Left cardiac atrium (tissue), 4 donors: ENCODE measurements at regions of chr13 and their contacts with region 1.

Region 1: GRCh38 chr13:112873851-112874750 is 94.9 kb upstream of the MCF2L start:
- DNase-seq: peak; percentile 85
- ATAC-seq: peak; percentile 80 to 84

Region 2: DNA sequence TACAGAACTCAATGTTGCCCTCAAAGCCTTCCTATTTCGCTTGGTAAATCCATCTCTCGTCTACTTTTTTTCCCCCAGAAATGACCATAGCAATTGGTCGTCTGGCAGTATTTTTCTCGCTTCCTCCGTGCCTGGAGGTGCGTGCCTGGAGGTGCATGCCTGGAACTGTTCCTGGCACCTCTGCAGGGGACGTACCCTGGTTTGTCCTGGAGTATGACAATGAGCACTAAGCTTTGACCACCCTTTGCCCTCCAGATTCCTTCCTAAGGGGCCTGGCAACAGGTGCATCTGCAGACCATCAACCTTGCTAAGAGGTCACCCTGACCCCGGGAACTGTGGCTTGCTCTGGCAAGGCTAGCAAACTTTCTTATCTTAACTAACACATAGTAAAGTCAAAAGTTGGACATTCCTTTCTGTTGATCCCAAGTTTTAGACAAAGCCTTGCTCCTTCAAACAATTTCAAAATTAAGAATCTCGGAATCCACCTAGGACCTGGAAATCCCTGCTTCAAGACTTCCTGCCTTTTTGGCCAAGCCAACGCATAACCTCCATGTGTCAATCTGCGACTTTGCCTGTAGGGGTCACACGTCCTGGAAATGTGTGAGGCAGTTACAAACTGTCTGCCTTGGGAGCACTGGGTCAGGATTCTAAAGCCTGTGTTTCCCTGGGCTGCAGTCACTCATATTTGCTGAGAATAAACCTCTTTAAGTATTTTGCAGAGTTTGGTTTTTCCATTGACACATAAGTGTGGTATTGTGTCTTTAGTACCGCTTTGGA is 257.3 kb before region 1 on chr13:
- intact Hi-C with region 1: loop called in 1 of 2 experiments (anchors 10 kb)
- DNase-seq: no peak
- ATAC-seq: peak; percentile 50 to 65

Region 3: DNA sequence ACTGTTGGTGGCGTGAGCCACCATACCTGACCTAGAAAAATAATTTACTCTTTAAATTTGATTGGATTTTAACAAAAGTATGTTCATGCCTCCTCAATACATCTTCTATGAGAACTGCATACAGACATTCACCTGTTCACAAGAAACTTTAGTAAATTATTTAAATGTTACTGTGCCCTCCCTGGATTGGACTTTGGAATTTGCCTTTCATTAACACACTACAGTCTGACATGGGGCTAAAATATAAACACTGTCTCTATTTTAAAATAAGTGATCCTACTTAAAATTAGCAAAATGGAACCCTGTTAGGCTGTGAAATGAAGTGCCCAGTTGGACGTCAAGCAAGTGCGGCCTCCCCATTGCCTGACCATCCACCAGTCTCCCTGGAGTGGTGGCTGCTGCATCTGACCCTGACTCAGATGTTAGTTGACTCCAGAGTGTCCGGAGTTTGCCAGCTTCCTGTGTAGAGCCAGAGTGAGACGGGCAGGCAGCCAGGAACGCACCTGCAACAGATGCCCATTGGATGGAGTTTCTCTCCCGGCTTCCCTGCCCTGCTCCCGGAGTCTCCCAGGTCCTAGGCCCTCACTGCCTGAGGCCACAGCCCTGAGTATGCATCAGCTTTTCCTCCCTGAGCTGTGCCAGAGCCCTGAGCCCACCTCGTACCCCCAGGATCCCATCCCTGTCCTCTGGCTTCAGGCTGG is 230.2 kb before region 1 on chr13:
- intact Hi-C with region 1: loop called (anchors 10 kb)
- DNase-seq: no peak
- ATAC-seq: no peak